ENCODE measurements at regions of chr1 and their contacts with region 1.

Region 1: DNA sequence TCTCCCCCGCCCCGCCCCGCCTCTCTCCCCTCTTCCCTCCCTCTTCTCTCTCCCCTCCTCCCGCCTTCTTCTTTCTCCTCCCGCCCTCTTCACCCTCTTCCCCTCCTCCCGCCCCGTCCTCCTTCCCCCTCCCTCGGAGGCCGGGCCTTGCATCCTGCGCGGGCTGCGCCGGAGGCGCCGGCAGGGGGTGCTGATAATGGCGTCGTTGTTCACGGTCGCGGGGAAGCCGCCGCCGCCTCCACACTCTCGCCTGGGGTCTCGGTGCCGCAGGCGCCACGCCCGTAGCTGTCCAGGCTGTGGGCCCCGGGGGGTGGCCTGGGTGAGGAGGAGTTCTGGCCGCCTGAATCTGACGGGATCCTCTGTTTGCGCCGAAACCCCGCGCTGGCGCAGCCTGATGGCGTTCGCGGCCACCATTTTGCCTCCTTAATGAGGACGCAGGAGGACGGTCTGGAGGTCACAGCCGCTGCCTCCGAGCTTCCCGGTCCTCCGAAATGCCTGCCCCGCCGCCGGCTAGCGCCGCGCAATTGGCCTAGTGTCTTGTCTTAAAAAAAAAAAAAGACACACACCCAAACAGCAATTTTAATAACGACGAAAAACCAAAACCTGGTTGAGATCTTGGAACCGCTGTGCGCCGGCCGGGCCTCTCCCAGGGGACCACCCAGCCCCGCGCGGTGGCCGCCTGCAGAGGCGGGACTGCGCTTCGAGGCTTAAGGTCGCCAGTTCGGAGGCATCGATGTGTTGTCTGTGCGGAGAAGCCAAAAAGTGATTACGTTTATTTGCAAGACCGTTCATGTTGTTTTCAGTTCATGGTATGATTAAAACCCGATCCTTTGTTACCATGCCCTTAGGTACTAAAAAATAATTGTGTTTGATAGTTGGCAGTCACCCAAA is 106.6 kb upstream of the HNRNPU start:
- DNase-seq: peak; percentile 97
- ATAC-seq: peak; percentile 91

Region 2: GRCh38 chr1:244835276-244836134 is 135.4 kb before region 1 on chr1 and contains the start of gene COX20:
- intact Hi-C with region 1: loop called (anchors 1 kb)
- DNase-seq: peak; percentile 96
- ATAC-seq: peak; percentile 92
- total RNA-seq, gene COX20: 58.4 TPM

Region 3: DNA sequence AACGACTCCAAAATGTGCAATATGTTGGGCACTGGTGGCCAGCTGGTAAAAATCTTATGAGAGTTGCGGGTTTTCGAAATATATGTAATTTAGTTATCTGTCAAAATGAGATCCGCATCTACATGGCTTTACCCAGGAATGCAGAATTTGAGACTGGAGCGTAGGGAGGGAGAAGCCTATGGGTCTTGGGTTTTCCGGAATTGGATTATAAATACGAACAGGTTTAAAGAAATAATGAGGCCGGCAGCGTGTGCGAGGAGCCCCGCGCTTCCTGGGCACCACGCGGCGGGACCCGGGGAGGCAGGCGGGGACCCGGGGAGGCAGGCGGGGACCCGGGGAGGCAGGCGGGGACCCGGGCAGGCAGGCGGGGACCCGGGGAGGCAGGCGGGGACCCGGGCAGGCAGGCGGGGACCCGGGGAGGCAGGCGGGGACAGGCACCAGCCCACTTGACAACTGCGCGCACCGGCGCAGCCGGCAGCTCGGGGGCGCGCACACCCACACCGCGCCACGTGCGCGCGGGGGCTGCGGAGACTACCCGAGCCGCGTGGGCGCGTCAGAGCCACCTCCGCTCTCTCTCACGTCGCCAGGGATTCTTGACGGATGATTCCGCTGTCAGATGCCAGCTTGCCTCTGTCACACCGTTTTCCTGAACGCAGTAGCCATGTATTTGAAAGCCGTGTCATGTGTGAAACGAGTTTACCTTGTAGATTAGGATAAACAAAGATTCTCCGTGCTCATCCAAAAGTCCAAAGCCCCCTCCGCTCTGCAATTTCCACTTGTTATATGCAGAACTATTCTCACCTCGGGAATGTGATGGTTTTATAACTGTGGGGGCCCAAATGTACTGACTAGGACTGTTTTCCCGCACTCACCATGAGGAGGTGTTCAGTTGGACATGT is 52.2 kb before region 1 on chr1:
- intact Hi-C with region 1: loop called (anchors 5 kb)
- DNase-seq: no peak
- ATAC-seq: peak; percentile 92